MCF 10A (cell line): ENCODE measurements at regions of chr15 and their contacts with region 1.

Region 1: DNA sequence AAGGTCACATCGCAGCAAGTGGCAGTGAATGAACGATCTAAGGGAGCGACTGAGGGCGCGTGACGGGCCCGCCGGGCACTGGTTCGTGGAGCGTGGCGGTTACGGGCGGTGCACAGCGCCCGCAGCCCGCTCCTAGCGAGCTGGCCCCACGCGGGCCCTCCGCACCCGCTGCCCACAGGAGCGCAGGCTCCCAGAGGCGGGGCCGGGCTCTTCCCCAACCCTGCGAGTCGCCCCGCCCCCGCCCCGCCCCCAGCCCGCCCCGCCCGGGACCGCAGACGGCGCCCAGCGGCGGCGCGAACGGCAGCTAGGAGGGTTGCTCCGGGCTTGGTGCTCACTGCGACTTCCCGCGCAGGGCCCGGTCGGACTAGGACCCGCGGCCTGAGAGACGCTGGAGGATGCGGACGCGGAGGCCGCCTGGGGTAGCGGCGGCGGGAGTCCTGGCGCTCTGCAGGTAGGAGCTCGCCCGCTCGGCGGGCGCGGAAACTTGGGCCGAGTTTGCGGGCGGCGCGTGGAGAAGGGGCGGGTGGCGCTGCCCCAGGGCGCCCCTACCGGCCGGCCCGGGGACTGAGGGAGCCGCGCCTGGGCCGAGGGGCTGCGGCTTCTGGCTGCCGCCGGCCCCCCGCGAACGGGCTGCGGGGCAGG is at the start of gene C15orf39:
- DNase-seq: peak; percentile 67
- H3K4me3 Mint-ChIP-seq: peak within 1 kb of the TSS; percentile 91
- H3K27ac Mint-ChIP-seq: peak within 1 kb of the TSS; percentile 94
- H3K4me1 Mint-ChIP-seq: peaks cover 17% of the 10 kb centered on the region
- H3K27me3 Mint-ChIP-seq: no peaks in the 10 kb centered on the region
- CTCF ChIP-seq: peak; percentile 91
- total RNA-seq, gene C15orf39: 13.3 and 17.2 TPM in 2 replicates

Region 2: GRCh38 chr15:74781431-74782258 is 420.1 kb before region 1 on chr15 and contains the start of gene CSK:
- CTCF ChIA-PET with region 1: no interaction called
- POLR2A ChIA-PET with region 1: no interaction called
- intact Hi-C with region 1: loop called (anchors 10 kb)
- DNase-seq: peak; percentile 68
- H3K4me3 Mint-ChIP-seq: peak within 1 kb of the TSS; percentile 92
- H3K27ac Mint-ChIP-seq: peak within 1 kb of the TSS; percentile 85
- H3K4me1 Mint-ChIP-seq: peaks cover 23% of the 10 kb centered on the region
- H3K27me3 Mint-ChIP-seq: no peaks in the 10 kb centered on the region
- CTCF ChIP-seq: peak; percentile 58
- total RNA-seq, gene CSK: 50.4 and 65.3 TPM in 2 replicates

Region 3: DNA sequence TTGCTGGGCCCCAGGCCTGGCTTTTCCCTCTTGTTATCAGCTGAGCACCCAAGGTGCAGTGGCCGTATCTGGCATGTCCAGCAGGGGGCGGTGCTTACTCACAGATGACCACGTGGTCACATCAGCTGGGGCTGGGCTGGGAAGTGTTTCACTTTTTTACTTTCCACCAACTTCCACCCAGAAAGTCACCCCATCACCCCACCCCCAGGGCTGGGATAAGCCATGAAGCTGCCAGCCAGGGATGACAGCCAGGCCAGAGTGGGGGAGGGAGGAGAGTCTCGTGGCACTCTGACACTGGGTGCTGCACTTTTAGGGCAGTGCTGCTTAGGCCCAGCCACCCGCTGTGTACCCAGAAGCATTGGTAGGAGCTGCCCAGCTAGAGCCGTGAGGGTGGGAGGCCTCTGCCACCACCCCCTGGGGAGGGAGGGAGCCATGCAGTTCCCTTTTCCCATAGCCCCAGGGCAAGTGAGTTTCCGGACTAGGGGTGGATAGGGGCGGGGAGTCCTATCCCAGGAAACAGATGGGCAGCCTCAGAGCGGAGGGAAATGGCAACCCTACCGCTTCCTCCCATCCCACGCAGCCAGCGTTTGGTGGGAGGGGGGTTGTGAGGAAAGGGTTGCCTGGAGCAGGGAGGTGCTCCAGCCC is 172.2 kb before region 1 on chr15:
- CTCF ChIA-PET with region 1: interaction called, 85 read pairs
- POLR2A ChIA-PET with region 1: interaction called, 61 read pairs
- intact Hi-C with region 1: loop called (anchors 1 kb)
- DNase-seq: peak; percentile 94
- H3K4me3 Mint-ChIP-seq: peak overlapping the region; percentile 10
- H3K27ac Mint-ChIP-seq: peak overlapping the region; percentile 27
- H3K4me1 Mint-ChIP-seq: peaks cover 19% of the 10 kb centered on the region
- H3K27me3 Mint-ChIP-seq: no peaks in the 10 kb centered on the region
- CTCF ChIP-seq: peak; percentile 91

Region 4: DNA sequence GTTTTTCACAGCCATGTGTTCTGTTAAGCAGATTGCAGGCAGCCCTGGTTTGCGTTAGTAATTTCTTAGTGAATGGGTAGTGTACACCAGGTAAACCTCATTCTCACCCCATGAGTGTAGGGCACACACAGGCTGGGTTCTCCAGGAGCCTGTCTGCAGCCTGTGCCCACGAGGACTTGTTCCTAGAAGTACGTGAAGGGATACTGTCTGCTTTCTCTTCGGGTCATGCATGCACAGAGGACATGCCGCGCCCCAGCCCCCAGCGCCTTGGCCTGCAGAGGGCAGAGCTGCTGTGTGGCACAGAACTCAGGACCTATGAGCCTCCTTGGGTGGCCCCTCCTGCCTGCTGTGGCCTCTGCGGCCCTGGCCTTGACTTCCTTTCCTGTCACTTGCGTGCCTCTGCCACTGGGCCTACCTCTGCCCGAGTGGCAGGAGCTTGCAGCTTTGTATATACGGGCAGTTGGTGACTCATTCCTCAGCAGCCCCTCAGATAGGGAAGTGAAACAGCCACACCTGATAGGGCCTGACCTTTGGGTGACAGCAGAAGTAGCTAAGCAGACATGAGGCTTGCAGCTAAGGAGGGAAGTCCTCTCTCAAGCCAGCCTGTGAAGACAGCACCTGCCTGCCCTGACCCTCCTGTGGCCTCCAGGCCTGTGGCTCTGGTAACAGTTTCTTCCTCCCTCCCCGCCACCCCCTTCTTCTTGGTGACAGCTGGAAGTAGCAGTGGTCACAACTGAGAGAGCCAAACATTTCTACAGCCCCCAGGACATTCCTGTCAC is 158.8 kb before region 1 on chr15:
- CTCF ChIA-PET with region 1: interaction called, 9 read pairs
- POLR2A ChIA-PET with region 1: interaction called, 4 read pairs
- intact Hi-C with region 1: loop called (anchors 1 kb)
- DNase-seq: peak; percentile 39
- H3K4me3 Mint-ChIP-seq: no peak overlapping the region
- H3K27ac Mint-ChIP-seq: peak overlapping the region; percentile 76
- H3K4me1 Mint-ChIP-seq: peaks cover 16% of the 10 kb centered on the region
- H3K27me3 Mint-ChIP-seq: no peaks in the 10 kb centered on the region
- CTCF ChIP-seq: peak; percentile 29

Region 5: GRCh38 chr15:75174101-75174500 is 27.6 kb before region 1 on chr15:
- CTCF ChIA-PET with region 1: interaction called, 4 read pairs
- POLR2A ChIA-PET with region 1: interaction called, 24 read pairs
- intact Hi-C with region 1: no loop called
- DNase-seq: no peak
- H3K4me3 Mint-ChIP-seq: no peak overlapping the region
- H3K27ac Mint-ChIP-seq: no peak overlapping the region
- H3K4me1 Mint-ChIP-seq: peaks cover 36% of the 10 kb centered on the region
- H3K27me3 Mint-ChIP-seq: no peaks in the 10 kb centered on the region
- CTCF ChIP-seq: no peak

Region 6: DNA sequence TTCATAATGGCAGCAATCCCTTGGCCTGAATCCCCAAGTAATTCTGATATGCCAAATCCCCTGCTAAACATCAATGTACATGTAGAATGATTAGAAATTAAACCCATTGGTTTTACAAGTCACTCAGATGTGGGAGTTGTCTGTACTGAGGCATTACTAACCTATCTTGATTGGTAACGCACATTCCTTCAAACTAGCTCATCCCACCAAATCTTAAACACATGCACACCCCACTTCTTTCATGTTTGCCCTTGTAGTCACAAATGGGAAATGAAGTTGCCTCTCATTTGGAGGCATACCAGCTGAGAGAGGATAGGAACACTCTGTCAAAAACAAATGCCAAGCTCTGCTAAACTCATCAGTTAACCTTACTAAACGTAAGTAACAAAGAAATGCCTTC is 195.8 kb after region 1 on chr15:
- CTCF ChIA-PET with region 1: no interaction called
- POLR2A ChIA-PET with region 1: no interaction called
- intact Hi-C with region 1: no loop called
- DNase-seq: no peak
- H3K4me3 Mint-ChIP-seq: no peak overlapping the region
- H3K27ac Mint-ChIP-seq: no peak overlapping the region
- H3K4me1 Mint-ChIP-seq: no peaks in the 10 kb centered on the region
- H3K27me3 Mint-ChIP-seq: no peaks in the 10 kb centered on the region
- CTCF ChIP-seq: no peak